Heart left ventricle (tissue), 16 donors: ENCODE measurements at regions of chr11 and their contacts with region 1.

Region 1: GRCh38 chr11:72722050-72722748 is 30.0 kb downstream of the ARAP1 start:
- DNase-seq: peak; percentile 91 to 94 (median 92)
- ATAC-seq: peak; percentile 79 to 84 (median 81)
- H3K4me3 ChIP-seq: peak overlapping the region; percentile 25 to 86 (median 71)
- H3K27ac ChIP-seq: peak overlapping the region; percentile 82 to 98 (median 92)
- H3K4me1 ChIP-seq: peaks cover 3 to 84% (median 47%) of the 10 kb centered on the region in 12 donors
- H3K27me3 ChIP-seq: no peaks in the 10 kb centered on the region
- CTCF ChIP-seq: no peak
- POLR2A ChIP-seq: peak in 1 of 2 donors; percentile 66

Region 2: DNA sequence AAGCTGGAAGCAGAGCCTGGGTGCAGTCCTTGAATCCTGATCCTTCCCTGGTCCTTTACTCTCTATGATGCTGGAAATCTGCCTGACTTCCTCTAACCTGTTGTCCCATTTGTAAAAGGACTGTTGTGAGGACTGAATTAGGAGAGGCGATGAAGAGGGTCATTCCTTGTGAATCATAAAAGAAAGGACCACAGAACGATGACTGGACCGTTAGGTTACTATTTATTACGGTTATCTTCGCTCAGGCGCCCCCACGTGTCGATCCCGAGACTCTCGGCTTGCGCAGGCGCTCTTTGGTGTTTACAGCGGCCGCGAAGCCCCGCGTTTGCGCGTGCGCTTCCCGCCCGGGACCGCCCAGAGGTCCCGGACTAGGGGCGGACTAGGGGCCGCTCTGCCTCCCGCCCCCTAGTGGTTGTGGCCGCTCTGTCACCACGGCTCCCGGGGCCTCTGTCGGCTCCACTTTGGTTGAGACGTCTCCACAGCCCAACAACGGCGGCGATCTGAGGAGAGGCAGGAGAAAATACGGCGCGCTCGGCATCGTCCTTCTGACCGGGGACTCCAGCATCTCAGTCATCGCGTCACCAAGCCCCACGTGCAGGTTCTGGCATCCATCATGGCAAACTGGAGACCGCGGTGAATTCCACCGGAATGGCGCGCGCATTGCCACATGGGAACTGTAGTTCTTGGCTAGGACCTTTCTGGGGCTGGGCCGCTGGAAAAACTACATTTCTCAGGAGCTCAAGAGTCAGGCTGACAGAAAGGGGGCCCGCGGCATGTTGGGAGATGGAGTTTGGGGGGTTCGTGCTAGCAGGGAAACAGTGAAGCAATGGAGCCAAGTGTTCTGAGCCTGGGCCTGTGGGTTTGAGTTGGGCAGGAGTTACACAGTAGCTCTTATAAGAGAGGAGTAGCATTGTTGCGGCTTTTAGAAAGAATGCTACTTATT is 71.5 kb after region 1 on chr11 and contains the start of gene STARD10:
- intact Hi-C with region 1: loop called in 9 of 10 experiments (anchors 1 to 5 kb)
- DNase-seq: peak; percentile 96 to 98 (median 97)
- ATAC-seq: peak; percentile 95 to 96 (median 96)
- H3K4me3 ChIP-seq: peak within 1 kb of the TSS; percentile 49 to 80 (median 68)
- H3K27ac ChIP-seq: peak within 1 kb of the TSS; percentile 51 to 97 (median 92)
- H3K4me1 ChIP-seq: peaks cover 0 to 37% (median 28%) of the 10 kb centered on the region in 12 donors
- H3K27me3 ChIP-seq: no peaks in the 10 kb centered on the region
- CTCF ChIP-seq: peak; percentile 94 to 100 (median 98)
- POLR2A ChIP-seq: peak in 1 of 2 donors; percentile 52
- total RNA-seq, gene STARD10: 35.2 to 78.8 (median 55.2) TPM

Region 3: GRCh38 chr11:72814286-72815109 is 92.3 kb after region 1 on chr11 and contains the start of gene ATG16L2:
- intact Hi-C with region 1: loop called in 2 of 10 experiments (anchors 2 to 5 kb)
- DNase-seq: peak; percentile 88 to 93 (median 90)
- ATAC-seq: peak; percentile 80 to 94 (median 92)
- H3K4me3 ChIP-seq: peak within 1 kb of the TSS; percentile 67 to 99 (median 78)
- H3K27ac ChIP-seq: peak within 1 kb of the TSS; percentile 90 to 100 (median 96)
- H3K4me1 ChIP-seq: peaks cover 0 to 58% (median 33%) of the 10 kb centered on the region in 12 donors
- H3K27me3 ChIP-seq: no peaks in the 10 kb centered on the region
- CTCF ChIP-seq: peak in 10 of 12 donors; percentile 17 to 60 (median 36)
- POLR2A ChIP-seq: peak in 1 of 2 donors; percentile 81
- total RNA-seq, gene ATG16L2: 6.0 to 28.9 (median 13.2) TPM

Region 4: GRCh38 chr11:72962084-72962483 is 239.9 kb after region 1 on chr11:
- intact Hi-C with region 1: no loop called
- DNase-seq: no peak
- ATAC-seq: no peak
- H3K4me3 ChIP-seq: no peak overlapping the region
- H3K27ac ChIP-seq: no peak overlapping the region
- H3K4me1 ChIP-seq: peaks cover 0 to 22% (median 0%) of the 10 kb centered on the region in 12 donors
- H3K27me3 ChIP-seq: no peaks in the 10 kb centered on the region
- CTCF ChIP-seq: no peak
- POLR2A ChIP-seq: no peak

Region 5: GRCh38 chr11:73271936-73272719 is 549.9 kb after region 1 on chr11 and contains the start of gene P2RY6:
- intact Hi-C with region 1: loop called in 1 of 10 experiments (anchors 10 kb)
- DNase-seq: peak in 3 of 5 donors; percentile 31 to 53 (median 45)
- ATAC-seq: peak; percentile 21 to 68 (median 64)
- H3K4me3 ChIP-seq: peak within 1 kb of the TSS in 9 of 12 donors; percentile 2 to 57 (median 25)
- H3K27ac ChIP-seq: peak within 1 kb of the TSS in 7 of 12 donors; percentile 4 to 82 (median 33)
- H3K4me1 ChIP-seq: peaks cover 0 to 74% (median 24%) of the 10 kb centered on the region in 12 donors
- H3K27me3 ChIP-seq: no peaks in the 10 kb centered on the region
- CTCF ChIP-seq: no peak
- POLR2A ChIP-seq: no peak
- total RNA-seq, gene P2RY6: 0.56 to 17.7 (median 2.0) TPM

Region 6: DNA sequence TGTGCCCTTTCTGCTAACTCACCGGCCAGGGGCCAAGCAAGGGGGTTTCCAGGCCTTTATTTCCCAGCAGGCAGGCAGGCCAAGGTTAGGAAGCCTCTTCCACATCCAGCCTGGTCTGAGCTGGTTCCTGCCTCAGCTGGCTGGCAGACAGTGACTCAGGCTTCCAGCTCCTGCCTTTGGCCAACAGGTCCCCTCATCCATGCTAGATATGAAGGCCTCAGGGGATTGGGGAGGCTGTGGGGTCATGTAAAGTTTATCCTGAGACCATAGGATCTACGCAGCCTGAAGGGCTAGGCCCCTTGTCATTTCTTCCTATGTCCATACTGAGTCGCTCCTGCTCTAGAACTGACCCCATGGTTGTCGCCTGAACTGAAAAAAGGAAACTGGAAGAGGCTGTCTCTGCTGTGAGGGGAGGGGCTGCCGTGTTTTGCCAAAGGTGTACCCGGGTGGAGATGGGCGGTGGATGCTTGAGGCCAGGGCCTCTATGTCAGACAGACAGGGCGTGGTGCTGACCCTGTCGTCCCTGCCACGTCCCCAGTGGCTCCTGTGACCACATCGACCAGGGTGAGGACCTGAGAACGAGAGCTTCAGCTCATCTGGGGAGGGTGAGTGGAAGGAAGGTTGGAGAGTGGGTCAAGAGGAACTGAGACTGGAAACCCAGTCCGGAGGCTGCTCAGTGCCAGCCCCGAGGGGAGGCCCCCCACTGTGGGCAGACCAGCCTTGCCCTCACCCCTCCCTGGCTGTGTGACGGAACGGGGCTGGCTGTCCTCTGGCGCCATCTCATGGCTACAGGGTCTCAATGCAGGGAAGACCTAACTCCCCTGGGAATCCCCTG is 566.9 kb after region 1 on chr11:
- intact Hi-C with region 1: loop called in 2 of 10 experiments (anchors 10 kb)
- DNase-seq: peak; percentile 78 to 88 (median 83)
- ATAC-seq: peak; percentile 57 to 84 (median 80)
- H3K4me3 ChIP-seq: peak overlapping the region in 9 of 12 donors; percentile 14 to 54 (median 41)
- H3K27ac ChIP-seq: peak overlapping the region in 11 of 12 donors; percentile 19 to 95 (median 58)
- H3K4me1 ChIP-seq: peaks cover 0 to 67% (median 29%) of the 10 kb centered on the region in 12 donors
- H3K27me3 ChIP-seq: no peaks in the 10 kb centered on the region
- CTCF ChIP-seq: peak; percentile 88 to 96 (median 92)
- POLR2A ChIP-seq: no peak